ENCODE measurements at regions of chr5 and their contacts with region 1.

Region 1: DNA sequence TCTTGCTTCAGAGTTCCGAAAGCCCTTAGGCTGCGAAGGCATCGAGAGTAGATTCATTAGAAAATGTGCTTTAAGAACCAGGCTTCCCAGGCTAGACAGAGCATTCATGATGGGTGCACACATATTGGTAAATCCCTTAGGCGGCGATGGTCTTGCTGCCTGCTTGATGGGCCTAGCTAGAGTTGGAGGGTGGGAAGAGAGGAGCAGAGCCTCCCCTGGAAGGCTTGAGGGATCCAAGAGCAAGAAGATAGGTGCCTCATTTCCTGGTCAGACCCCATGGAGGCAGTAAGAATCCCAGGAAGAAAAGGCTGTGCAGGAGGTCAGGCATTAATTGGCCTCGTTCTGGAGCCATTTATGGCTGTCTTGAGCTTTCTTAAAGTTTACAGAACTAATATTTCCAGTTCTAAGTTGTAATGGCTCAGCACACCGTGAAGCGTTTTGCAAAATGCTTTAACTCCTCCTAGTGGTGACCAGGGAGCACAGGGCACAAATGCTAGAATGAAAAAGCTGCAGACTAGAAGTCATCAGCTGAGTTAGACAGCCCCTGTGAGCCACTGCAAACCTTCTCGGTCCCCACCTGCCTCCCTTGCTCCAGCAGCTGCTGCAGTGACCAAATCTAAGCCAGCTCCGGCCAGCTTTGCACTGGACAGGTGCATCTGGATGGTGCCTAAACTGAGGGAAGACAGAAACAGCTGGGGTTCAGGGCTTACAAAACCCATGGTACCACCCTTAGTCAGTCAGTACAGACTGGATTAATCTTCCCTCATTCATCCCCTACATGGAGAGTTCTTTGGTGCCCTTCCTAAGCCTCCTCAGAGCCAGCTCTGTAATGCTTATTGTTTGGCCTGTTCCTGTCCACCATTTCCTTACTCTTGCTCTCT is 14.7 kb downstream of the SLC45A2 start:
- DNase-seq: no peak
- H3K4me3 ChIP-seq: no peak overlapping the region
- CTCF ChIP-seq: peak; percentile 81

Region 2: DNA sequence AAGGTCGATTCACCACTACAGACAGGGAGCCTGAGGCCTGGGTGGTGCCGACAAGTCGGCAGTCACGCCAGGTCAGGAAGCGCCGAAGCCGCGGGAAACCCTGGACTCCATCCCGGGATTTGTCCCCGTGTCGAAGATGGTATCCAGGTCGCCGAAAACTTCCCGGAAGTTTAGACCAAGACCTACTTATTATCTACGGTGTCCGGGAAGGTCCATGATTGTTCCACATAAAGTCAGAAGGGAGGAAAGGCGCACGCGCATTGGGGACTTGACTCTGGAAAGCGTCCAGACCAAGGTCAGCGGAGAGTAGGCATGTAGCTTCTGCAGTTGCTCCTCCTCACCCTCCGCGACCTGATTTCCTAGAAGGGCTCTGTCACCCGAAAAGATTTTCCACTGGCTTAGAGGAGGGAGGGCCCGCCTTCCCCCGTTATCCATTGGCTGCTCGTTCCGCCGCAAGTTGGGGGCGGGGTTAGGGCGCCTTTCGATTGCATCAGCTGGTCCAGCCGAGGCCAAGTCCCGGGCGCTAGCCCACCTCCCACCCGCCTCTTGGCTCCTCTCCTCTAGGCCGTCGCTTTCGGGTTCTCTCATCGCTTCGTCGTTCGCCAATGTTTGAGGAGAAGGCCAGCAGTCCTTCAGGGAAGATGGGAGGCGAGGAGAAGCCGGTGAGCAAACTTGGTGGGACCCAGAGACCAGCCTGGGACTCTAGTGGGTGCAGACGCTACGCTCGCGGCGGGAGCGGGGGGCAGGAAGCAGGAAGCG is 529.2 kb before region 1 on chr5 and contains the start of gene TARS1:
- CTCF ChIA-PET with region 1: interaction called, 38 read pairs
- POLR2A ChIA-PET with region 1: no interaction called
- DNase-seq: peak; percentile 100
- H3K4me3 ChIP-seq: peak within 1 kb of the TSS; percentile 93
- CTCF ChIP-seq: no peak

Region 3: GRCh38 chr5:33470544-33470943 is 499.3 kb before region 1 on chr5:
- CTCF ChIA-PET with region 1: interaction called, 119 read pairs
- POLR2A ChIA-PET with region 1: interaction called, 7 read pairs
- DNase-seq: peak; percentile 16
- H3K4me3 ChIP-seq: no peak overlapping the region
- CTCF ChIP-seq: peak; percentile 62

Region 4: GRCh38 chr5:33649796-33650482 is 319.9 kb before region 1 on chr5:
- CTCF ChIA-PET with region 1: interaction called, 17 read pairs
- POLR2A ChIA-PET with region 1: no interaction called
- DNase-seq: peak; percentile 83
- H3K4me3 ChIP-seq: no peak overlapping the region
- CTCF ChIP-seq: no peak

Region 5: GRCh38 chr5:33867241-33867640 is 102.6 kb before region 1 on chr5:
- CTCF ChIA-PET with region 1: no interaction called
- POLR2A ChIA-PET with region 1: no interaction called
- DNase-seq: no peak
- H3K4me3 ChIP-seq: no peak overlapping the region
- CTCF ChIP-seq: no peak

Region 6: DNA sequence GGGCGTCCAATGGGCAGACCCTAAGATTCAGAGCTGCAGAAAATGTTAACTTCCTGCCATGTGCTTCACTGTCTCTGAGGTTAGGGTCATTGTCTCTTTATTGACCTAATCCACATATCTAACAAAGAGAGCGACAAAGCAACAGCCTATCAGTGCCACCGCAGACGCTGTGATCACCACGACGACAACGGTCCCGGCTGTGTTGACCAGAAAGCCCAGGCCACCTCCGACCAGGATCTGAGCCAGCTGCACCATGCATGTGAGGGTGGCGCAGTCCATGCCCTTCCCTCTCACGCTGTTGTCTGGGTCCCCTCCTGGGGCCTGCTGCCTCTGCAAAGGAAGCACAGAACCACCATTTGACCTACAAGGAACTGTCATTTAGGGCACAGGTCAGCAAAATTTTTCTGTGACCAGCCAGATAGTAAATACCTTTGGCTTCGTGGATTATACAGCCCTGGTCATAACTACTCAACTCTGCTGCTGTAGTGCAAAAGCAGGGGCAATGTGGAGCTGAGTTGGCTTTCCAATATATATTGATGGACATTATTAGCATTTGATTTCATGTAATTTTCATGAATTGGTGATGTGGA is 25.2 kb before region 1 on chr5:
- CTCF ChIA-PET with region 1: interaction called, 15 read pairs
- POLR2A ChIA-PET with region 1: no interaction called
- DNase-seq: no peak
- H3K4me3 ChIP-seq: no peak overlapping the region
- CTCF ChIP-seq: no peak

Measured in AG04449 (cell line).